ENCODE measurements at regions of chr1 and their contacts with region 1.

Region 1: GRCh38 chr1:66300972-66301451 is 232.9 kb upstream of the SGIP1 start:
- DNase-seq: peak in 1 of 2 experiments; percentile 4
- H3K4me3 ChIP-seq: peak overlapping the region; percentile 54
- H3K27ac ChIP-seq: no peak overlapping the region
- H3K4me1 ChIP-seq: peaks cover 6% of the 10 kb centered on the region; the same call in 1 of the 2 replicates
- H3K27me3 ChIP-seq: no peaks in the 10 kb centered on the region
- CTCF ChIP-seq: no peak

Region 2: DNA sequence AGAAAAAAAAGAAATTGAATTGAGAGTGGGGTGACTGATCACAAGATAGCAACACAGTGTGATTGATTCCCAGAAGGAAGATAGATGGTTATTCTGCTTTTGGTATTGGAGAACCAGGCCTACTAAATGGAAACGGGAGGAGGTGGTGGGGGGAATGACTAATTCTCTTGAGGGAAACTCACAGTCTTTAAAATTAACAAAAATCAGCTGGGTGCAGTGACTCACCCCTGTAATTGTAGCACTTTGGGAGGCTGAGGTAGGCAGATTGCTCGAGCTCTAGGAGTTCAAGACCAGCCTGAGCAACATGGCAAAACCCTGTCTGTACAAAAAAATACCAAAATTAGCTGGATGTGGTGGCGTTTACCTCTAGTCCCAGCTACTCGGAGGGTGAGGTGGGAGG is 642.9 kb before region 1 on chr1:
- CTCF ChIA-PET with region 1: no interaction called
- POLR2A ChIA-PET with region 1: no interaction called
- intact Hi-C with region 1: no loop called
- DNase-seq: no peak
- H3K4me3 ChIP-seq: no peak overlapping the region
- H3K27ac ChIP-seq: no peak overlapping the region
- H3K4me1 ChIP-seq: no peaks in the 10 kb centered on the region
- H3K27me3 ChIP-seq: peaks cover 15% of the 10 kb centered on the region; the same call in 1 of the 2 replicates
- CTCF ChIP-seq: no peak

Region 3: GRCh38 chr1:66262211-66262963 is 38.6 kb before region 1 on chr1:
- CTCF ChIA-PET with region 1: no interaction called
- POLR2A ChIA-PET with region 1: no interaction called
- intact Hi-C with region 1: loop called (anchors 2 kb)
- DNase-seq: peak; percentile 52 to 85
- H3K4me3 ChIP-seq: no peak overlapping the region
- H3K27ac ChIP-seq: no peak overlapping the region
- H3K4me1 ChIP-seq: 0 out of 2 replicates have a peak, but pooled peaks cover 6% of the 10 kb centered on the region
- H3K27me3 ChIP-seq: no peaks in the 10 kb centered on the region
- CTCF ChIP-seq: no peak

Region 4: GRCh38 chr1:66315671-66316070 is 14.7 kb after region 1 on chr1:
- CTCF ChIA-PET with region 1: no interaction called
- POLR2A ChIA-PET with region 1: no interaction called
- intact Hi-C with region 1: loop called (anchors 1 kb)
- DNase-seq: peak; percentile 55 to 71
- H3K4me3 ChIP-seq: no peak overlapping the region
- H3K27ac ChIP-seq: peak overlapping the region; percentile 8; the same call in 1 of the 2 replicates
- H3K4me1 ChIP-seq: no peaks in the 10 kb centered on the region
- H3K27me3 ChIP-seq: no peaks in the 10 kb centered on the region
- CTCF ChIP-seq: no peak

Measured in PC-9 (cell line).